ENCODE measurements at regions of chr7 and their contacts with region 1.

Region 1: DNA sequence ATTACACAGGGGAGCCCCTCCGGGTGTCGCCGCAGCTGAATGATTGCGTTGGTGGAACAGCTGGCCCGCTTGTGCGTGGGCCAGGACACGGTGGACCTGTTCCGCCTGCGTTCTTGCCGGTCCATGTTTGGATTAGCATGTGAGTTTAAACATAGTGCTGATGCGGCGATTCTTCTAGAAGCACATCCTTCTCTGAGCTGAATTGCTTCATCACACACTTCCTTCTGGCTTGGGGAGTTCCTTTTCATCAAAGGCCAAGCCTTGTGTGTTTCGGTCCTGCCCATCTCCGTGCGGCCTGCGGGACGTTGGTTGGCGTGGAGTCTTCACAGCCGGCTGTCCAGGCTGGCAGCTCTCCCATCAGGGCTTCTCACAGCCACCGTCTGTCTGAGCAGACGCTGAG is 45.5 kb upstream of the SLC29A4 start:
- DNase-seq: no peak
- H3K4me3 ChIP-seq: no peak overlapping the region
- H3K4me3 Mint-ChIP-seq: no peak overlapping the region
- H3K27ac ChIP-seq: no peak overlapping the region
- H3K27ac Mint-ChIP-seq: no peak overlapping the region
- H3K4me1 ChIP-seq: peaks cover 13% of the 10 kb centered on the region
- H3K4me1 Mint-ChIP-seq: peaks cover 4 to 12% (median 6%) of the 10 kb centered on the region in 4 donors
- H3K27me3 ChIP-seq: no peaks in the 10 kb centered on the region
- H3K27me3 Mint-ChIP-seq: peaks cover 9 to 10% of the 10 kb centered on the region in 2 donors

Region 2: GRCh38 chr7:5375925-5376324 is 138.6 kb after region 1 on chr7:
- CTCF ChIA-PET with region 1: no interaction called
- POLR2A ChIA-PET with region 1: no interaction called
- intact Hi-C with region 1: no loop called
- DNase-seq: peak; percentile 35 to 63 (median 47)
- H3K4me3 ChIP-seq: no peak overlapping the region
- H3K4me3 Mint-ChIP-seq: peak overlapping the region in 7 of 8 donors; percentile 28 to 75 (median 57)
- H3K27ac ChIP-seq: no peak overlapping the region
- H3K27ac Mint-ChIP-seq: peak overlapping the region; percentile 62 to 93 (median 73)
- H3K4me1 ChIP-seq: peaks cover 12% of the 10 kb centered on the region
- H3K4me1 Mint-ChIP-seq: peaks cover 10 to 14% (median 11%) of the 10 kb centered on the region in 4 donors
- H3K27me3 ChIP-seq: no peaks in the 10 kb centered on the region
- H3K27me3 Mint-ChIP-seq: no peaks in the 10 kb centered on the region

Region 3: GRCh38 chr7:5450549-5451372 is 213.5 kb after region 1 on chr7:
- CTCF ChIA-PET with region 1: interaction called, 33 read pairs
- POLR2A ChIA-PET with region 1: no interaction called
- intact Hi-C with region 1: no loop called
- DNase-seq: peak in 4 of 5 donors; percentile 16 to 24 (median 23)
- H3K4me3 ChIP-seq: no peak overlapping the region
- H3K4me3 Mint-ChIP-seq: no peak overlapping the region
- H3K27ac ChIP-seq: no peak overlapping the region
- H3K27ac Mint-ChIP-seq: no peak overlapping the region
- H3K4me1 ChIP-seq: no peaks in the 10 kb centered on the region
- H3K4me1 Mint-ChIP-seq: no peaks in the 10 kb centered on the region
- H3K27me3 ChIP-seq: no peaks in the 10 kb centered on the region
- H3K27me3 Mint-ChIP-seq: peaks cover 0 to 2% of the 10 kb centered on the region in 2 donors

Measured in CD4-positive, alpha-beta memory T cell (primary cell).